ENCODE measurements at regions of chr20 and their contacts with region 1.

Region 1: GRCh38 chr20:35329435-35330139 is 37.4 kb upstream of the FAM83C start:
- DNase-seq: peak; percentile 82
- H3K4me3 Mint-ChIP-seq: no peak overlapping the region
- H3K27ac Mint-ChIP-seq: no peak overlapping the region
- H3K4me1 Mint-ChIP-seq: peaks cover 33% of the 10 kb centered on the region
- H3K27me3 Mint-ChIP-seq: no peaks in the 10 kb centered on the region

Region 2: GRCh38 chr20:35226775-35227681 is 102.6 kb before region 1 on chr20:
- CTCF ChIA-PET with region 1: no interaction called
- POLR2A ChIA-PET with region 1: no interaction called
- intact Hi-C with region 1: no loop called
- DNase-seq: peak; percentile 65
- H3K4me3 Mint-ChIP-seq: peak overlapping the region; percentile 55
- H3K27ac Mint-ChIP-seq: no peak overlapping the region
- H3K4me1 Mint-ChIP-seq: peaks cover 7% of the 10 kb centered on the region
- H3K27me3 Mint-ChIP-seq: peaks cover 27% of the 10 kb centered on the region

Region 3: GRCh38 chr20:35312348-35312747 is 17.2 kb before region 1 on chr20:
- CTCF ChIA-PET with region 1: interaction called, 151 read pairs
- POLR2A ChIA-PET with region 1: interaction called, 4 read pairs
- intact Hi-C with region 1: loop called (anchors 2 kb)
- DNase-seq: peak; percentile 61
- H3K4me3 Mint-ChIP-seq: no peak overlapping the region
- H3K27ac Mint-ChIP-seq: peak overlapping the region; percentile 86
- H3K4me1 Mint-ChIP-seq: peaks cover 56% of the 10 kb centered on the region
- H3K27me3 Mint-ChIP-seq: no peaks in the 10 kb centered on the region

Region 4: GRCh38 chr20:35318502-35319157 is 11.0 kb before region 1 on chr20:
- CTCF ChIA-PET with region 1: interaction called, 10 read pairs
- POLR2A ChIA-PET with region 1: no interaction called
- intact Hi-C with region 1: loop called (anchors 2 kb)
- DNase-seq: peak; percentile 21
- H3K4me3 Mint-ChIP-seq: no peak overlapping the region
- H3K27ac Mint-ChIP-seq: no peak overlapping the region
- H3K4me1 Mint-ChIP-seq: peaks cover 44% of the 10 kb centered on the region
- H3K27me3 Mint-ChIP-seq: no peaks in the 10 kb centered on the region

Measured in activated CD4-positive, alpha-beta memory T cell treated with anti-CD3 and anti-CD28 coated beads for 36 hours (primary cell).